ENCODE measurements at regions of chr6 and their contacts with region 1.

Region 1: GRCh38 chr6:44151348-44152108 is 7.1 kb upstream of the CAPN11 start:
- DNase-seq: peak; percentile 88
- ATAC-seq: peak; percentile 79

Region 2: GRCh38 chr6:44096612-44097011 is 54.9 kb before region 1 on chr6:
- intact Hi-C with region 1: loop called (anchors 5 kb)
- DNase-seq: peak; percentile 87
- ATAC-seq: peak; percentile 88